ENCODE measurements at regions of chr10 and their contacts with region 1.

Region 1: DNA sequence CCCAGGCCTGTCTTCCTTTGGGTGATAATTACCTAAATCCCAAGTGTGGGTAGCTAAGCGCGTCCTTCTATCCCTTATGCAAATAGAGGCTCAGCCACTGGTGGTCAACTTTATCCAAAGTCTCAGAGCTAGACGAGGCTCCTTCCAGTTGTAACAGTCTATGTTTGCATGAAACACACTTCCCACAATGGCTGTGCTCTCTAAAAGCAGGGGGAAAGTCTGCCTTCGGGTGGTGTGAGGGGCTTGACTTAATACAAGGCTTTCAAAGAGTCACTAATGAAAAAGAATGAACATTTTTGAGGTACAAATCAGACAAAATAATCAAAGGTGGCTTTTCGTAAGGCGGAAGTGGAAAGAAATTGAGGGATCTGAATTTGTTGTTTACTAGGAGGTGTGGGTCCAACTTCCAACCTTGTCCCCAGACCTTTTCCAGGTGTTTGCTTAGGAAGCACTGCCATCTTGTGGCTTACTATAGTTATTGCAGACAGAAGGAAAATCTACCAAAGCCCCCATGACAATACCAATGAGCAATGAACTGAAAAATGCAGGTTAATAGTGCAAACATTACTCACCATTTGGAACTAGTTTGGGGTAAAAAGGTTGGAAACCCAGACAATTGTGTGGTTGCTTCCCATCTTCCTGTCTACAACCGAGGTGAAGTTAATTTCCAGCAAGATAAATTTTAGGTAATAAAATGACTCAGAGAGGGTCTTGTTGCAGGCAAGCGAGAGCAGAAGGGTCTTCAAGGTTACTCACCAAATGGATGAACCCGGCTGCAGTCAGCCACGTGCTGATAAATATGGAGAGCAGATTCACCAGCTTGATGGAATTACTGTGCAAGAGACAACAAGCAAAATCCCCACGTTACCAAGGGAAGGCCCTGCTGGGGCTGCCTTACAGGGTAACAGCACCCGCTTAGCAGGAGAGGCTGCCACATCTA is 525.7 kb downstream of the KCNMA1 start:
- DNase-seq: no peak
- H3K4me3 ChIP-seq: no peak overlapping the region
- H3K27ac ChIP-seq: no peak overlapping the region
- H3K4me1 ChIP-seq: no peaks in the 10 kb centered on the region
- H3K27me3 ChIP-seq: no peaks in the 10 kb centered on the region
- CTCF ChIP-seq: peak; percentile 64 to 79 (median 78)
- POLR2A ChIP-seq: no peak

Region 2: GRCh38 chr10:76257816-76258215 is 854.1 kb before region 1 on chr10:
- intact Hi-C with region 1: loop called (anchors 5 kb)
- DNase-seq: no peak
- H3K4me3 ChIP-seq: no peak overlapping the region
- H3K27ac ChIP-seq: no peak overlapping the region
- H3K4me1 ChIP-seq: no peaks in the 10 kb centered on the region
- H3K27me3 ChIP-seq: no peaks in the 10 kb centered on the region
- CTCF ChIP-seq: no peak
- POLR2A ChIP-seq: no peak

Region 3: DNA sequence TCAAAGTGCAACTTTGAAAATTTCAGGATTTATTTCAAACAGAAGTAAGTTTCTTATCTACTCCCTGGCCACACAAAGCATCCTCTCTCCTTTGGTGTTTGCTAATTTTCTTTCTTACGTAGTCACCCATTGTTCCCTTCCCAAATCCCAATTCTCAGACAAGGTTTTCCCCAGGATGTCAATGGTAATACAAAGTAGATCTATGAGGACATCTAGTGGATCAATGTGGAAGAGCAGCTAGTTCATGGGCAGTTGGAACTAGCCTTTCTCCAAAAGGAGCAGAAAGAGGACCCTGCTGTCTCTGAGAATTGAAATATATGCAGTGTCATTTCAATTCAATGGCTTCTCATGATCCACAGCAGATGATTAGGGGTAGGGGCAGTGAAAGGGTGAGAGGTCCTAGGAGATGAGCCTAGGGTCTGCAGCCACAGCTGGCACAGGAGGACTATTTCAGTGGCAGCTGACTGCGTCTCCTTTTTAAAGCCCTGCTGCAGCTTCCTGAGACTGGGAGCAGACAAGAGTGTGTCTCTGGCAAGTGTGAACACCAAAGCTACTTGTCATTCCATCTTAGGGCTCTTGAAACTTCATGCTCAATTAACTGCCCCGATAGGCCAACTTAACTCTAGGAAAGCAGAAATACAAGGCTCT is 106.8 kb before region 1 on chr10:
- intact Hi-C with region 1: loop called (anchors 5 kb)
- DNase-seq: peak; percentile 11
- H3K4me3 ChIP-seq: no peak overlapping the region
- H3K27ac ChIP-seq: no peak overlapping the region
- H3K4me1 ChIP-seq: no peaks in the 10 kb centered on the region
- H3K27me3 ChIP-seq: no peaks in the 10 kb centered on the region
- CTCF ChIP-seq: peak; percentile 36 to 75 (median 61)
- POLR2A ChIP-seq: no peak

Measured in prostate gland (tissue), 2 donors.